T-cell (primary cell): ENCODE measurements at regions of chr2 and their contacts with region 1.

Region 1: GRCh38 chr2:20015472-20016083 is 3.1 kb upstream of the MATN3 start:
- DNase-seq: peak in 2 of 35 experiments; percentile 22 to 63
- ATAC-seq: peak in 2 of 4 experiments; percentile 37 to 55
- H3K4me3 ChIP-seq: no peak overlapping the region
- H3K4me3 Mint-ChIP-seq: no peak overlapping the region
- H3K27ac ChIP-seq: no peak overlapping the region
- H3K27ac Mint-ChIP-seq: no peak overlapping the region
- H3K4me1 ChIP-seq: peaks cover 4 to 13% of the 10 kb centered on the region in 2 experiments
- H3K4me1 Mint-ChIP-seq: peaks cover 5 to 13% (median 12%) of the 10 kb centered on the region in 3 donors
- H3K27me3 ChIP-seq: peaks cover 12 to 27% of the 10 kb centered on the region in 2 experiments
- H3K27me3 Mint-ChIP-seq: peaks cover 26 to 36% of the 10 kb centered on the region in 2 donors

Region 2: DNA sequence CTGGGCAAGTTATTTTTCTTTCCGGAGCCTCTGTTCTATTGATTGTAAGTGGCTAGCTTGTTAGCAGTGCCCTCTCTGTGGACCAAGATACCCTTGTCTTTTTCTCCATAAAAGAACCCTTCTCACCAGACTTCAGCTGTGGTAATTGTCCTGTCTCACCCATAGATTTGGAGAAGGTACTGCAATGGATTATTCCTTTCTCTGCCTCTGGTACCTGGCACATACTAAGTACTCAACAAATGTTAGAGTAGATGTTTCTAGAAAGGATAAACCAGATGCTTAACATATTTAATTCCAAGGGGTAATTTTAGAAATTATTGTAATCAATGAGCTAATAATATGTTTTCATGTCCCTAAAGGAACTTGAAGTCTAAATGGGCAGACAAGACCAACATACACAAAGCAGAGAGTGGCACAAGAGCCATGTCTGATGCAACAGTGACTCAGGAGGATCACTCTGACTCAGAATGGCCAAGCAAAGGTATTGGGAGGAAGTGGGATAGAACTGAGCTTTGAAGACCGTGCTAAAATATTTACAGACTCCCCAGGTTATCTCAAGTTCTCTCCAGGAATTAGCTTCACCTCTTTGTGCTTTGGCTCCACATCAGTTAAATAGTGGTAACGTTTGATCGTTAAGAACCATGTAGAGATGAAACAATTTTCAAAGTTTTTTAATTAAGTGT is 527.4 kb before region 1 on chr2:
- CTCF ChIA-PET with region 1: no interaction called
- POLR2A ChIA-PET with region 1: no interaction called
- DNase-seq: no peak
- ATAC-seq: no peak
- H3K4me3 ChIP-seq: no peak overlapping the region
- H3K4me3 Mint-ChIP-seq: no peak overlapping the region
- H3K27ac ChIP-seq: no peak overlapping the region
- H3K27ac Mint-ChIP-seq: no peak overlapping the region
- H3K4me1 ChIP-seq: no peaks in the 10 kb centered on the region
- H3K4me1 Mint-ChIP-seq: no peaks in the 10 kb centered on the region
- H3K27me3 ChIP-seq: peaks cover 0 to 3% of the 10 kb centered on the region in 2 experiments
- H3K27me3 Mint-ChIP-seq: peaks cover 31 to 43% of the 10 kb centered on the region in 2 donors

Region 3: DNA sequence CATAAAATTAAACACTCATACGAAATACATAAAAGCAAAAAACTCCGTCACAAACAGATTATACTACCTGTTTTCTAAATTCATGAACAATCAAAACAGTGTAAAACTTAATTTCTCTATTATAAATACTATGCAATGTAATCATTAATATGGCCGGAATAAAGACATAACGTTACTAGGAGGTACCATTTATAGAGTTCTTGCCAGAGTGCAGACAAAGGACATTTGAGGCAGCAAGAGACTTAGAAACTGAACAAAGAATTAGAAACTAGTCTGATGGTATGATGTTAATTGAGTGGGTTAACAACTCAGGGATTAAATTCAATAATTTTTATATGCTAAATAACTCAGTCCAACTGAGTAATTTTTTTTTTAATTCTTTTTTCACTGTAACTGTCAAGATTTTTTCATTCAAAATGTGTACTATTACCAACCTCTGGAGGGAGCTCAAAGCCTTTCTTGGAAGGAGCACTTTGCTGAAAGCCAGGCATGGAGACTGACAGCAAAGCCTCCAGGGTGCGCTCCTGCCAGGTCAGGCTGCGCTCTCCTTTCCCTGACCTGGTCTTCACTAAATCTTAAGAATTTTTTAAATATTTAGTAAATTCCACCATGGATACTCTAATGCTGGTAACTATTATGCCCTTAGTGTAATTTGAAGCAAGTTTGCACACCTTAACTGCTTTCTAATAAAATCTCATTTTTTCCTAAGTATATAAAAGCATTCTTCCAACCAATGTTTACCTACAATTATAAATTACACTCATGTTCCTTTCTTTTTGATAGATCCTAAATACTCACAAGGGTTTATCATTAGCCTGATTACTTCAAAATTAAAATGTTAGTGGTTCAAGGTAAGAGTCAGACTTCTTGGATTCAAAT is 59.8 kb before region 1 on chr2:
- CTCF ChIA-PET with region 1: interaction called in 1 of 2 experiments, 14 read pairs
- POLR2A ChIA-PET with region 1: no interaction called
- DNase-seq: peak in 32 of 35 experiments; percentile 3 to 70 (median 26)
- ATAC-seq: peak; percentile 63 to 83 (median 78)
- H3K4me3 ChIP-seq: no peak overlapping the region
- H3K4me3 Mint-ChIP-seq: no peak overlapping the region
- H3K27ac ChIP-seq: no peak overlapping the region
- H3K27ac Mint-ChIP-seq: no peak overlapping the region
- H3K4me1 ChIP-seq: no peaks in the 10 kb centered on the region
- H3K4me1 Mint-ChIP-seq: no peaks in the 10 kb centered on the region
- H3K27me3 ChIP-seq: no peaks in the 10 kb centered on the region
- H3K27me3 Mint-ChIP-seq: no peaks in the 10 kb centered on the region

Region 4: GRCh38 chr2:20001361-20001863 is 14.2 kb before region 1 on chr2:
- CTCF ChIA-PET with region 1: interaction called, 3 to 11 read pairs
- POLR2A ChIA-PET with region 1: no interaction called
- DNase-seq: no peak
- ATAC-seq: no peak
- H3K4me3 ChIP-seq: no peak overlapping the region
- H3K4me3 Mint-ChIP-seq: no peak overlapping the region
- H3K27ac ChIP-seq: no peak overlapping the region
- H3K27ac Mint-ChIP-seq: no peak overlapping the region
- H3K4me1 ChIP-seq: no peaks in the 10 kb centered on the region
- H3K4me1 Mint-ChIP-seq: no peaks in the 10 kb centered on the region
- H3K27me3 ChIP-seq: peaks cover 0 to 10% of the 10 kb centered on the region in 2 experiments
- H3K27me3 Mint-ChIP-seq: peaks cover 29 to 36% of the 10 kb centered on the region in 2 donors

Region 5: GRCh38 chr2:20051532-20052228 is 36.1 kb after region 1 on chr2 and contains the start of gene LAPTM4A:
- CTCF ChIA-PET with region 1: interaction called, 4 to 10 read pairs
- POLR2A ChIA-PET with region 1: no interaction called
- DNase-seq: peak; percentile 90 to 99 (median 98)
- ATAC-seq: peak; percentile 94 to 97 (median 96)
- H3K4me3 ChIP-seq: peak within 1 kb of the TSS; percentile 78 to 85
- H3K4me3 Mint-ChIP-seq: no peak within 1 kb of the TSS
- H3K27ac ChIP-seq: peak within 1 kb of the TSS; percentile 98
- H3K27ac Mint-ChIP-seq: no peak within 1 kb of the TSS
- H3K4me1 ChIP-seq: peaks cover 18 to 22% of the 10 kb centered on the region in 2 experiments
- H3K4me1 Mint-ChIP-seq: peaks cover 31 to 36% (median 32%) of the 10 kb centered on the region in 3 donors
- H3K27me3 ChIP-seq: peaks cover 2 to 11% of the 10 kb centered on the region in 2 experiments
- H3K27me3 Mint-ChIP-seq: peaks cover 12 to 19% of the 10 kb centered on the region in 2 donors
- total RNA-seq, gene LAPTM4A: 35.3 to 41.1 (median 38.1) TPM

Region 6: GRCh38 chr2:20097879-20098714 is 82.5 kb after region 1 on chr2:
- CTCF ChIA-PET with region 1: interaction called, 8 to 17 read pairs
- POLR2A ChIA-PET with region 1: no interaction called
- DNase-seq: peak; percentile 34 to 84 (median 66)
- ATAC-seq: peak; percentile 84 to 87 (median 86)
- H3K4me3 ChIP-seq: no peak overlapping the region
- H3K4me3 Mint-ChIP-seq: no peak overlapping the region
- H3K27ac ChIP-seq: no peak overlapping the region
- H3K27ac Mint-ChIP-seq: no peak overlapping the region
- H3K4me1 ChIP-seq: peaks cover 0 to 3% of the 10 kb centered on the region in 2 experiments
- H3K4me1 Mint-ChIP-seq: no peaks in the 10 kb centered on the region
- H3K27me3 ChIP-seq: peaks cover 0 to 23% of the 10 kb centered on the region in 2 experiments
- H3K27me3 Mint-ChIP-seq: peaks cover 6 to 28% of the 10 kb centered on the region in 2 donors

Region 7: GRCh38 chr2:20108655-20109396 is 93.2 kb after region 1 on chr2:
- CTCF ChIA-PET with region 1: interaction called, 3 to 11 read pairs
- POLR2A ChIA-PET with region 1: no interaction called
- DNase-seq: no peak
- ATAC-seq: no peak
- H3K4me3 ChIP-seq: no peak overlapping the region
- H3K4me3 Mint-ChIP-seq: no peak overlapping the region
- H3K27ac ChIP-seq: no peak overlapping the region
- H3K27ac Mint-ChIP-seq: no peak overlapping the region
- H3K4me1 ChIP-seq: peaks cover 0 to 5% of the 10 kb centered on the region in 2 experiments
- H3K4me1 Mint-ChIP-seq: peaks cover 0 to 9% (median 2%) of the 10 kb centered on the region in 3 donors
- H3K27me3 ChIP-seq: peaks cover 0 to 52% of the 10 kb centered on the region in 2 experiments
- H3K27me3 Mint-ChIP-seq: peaks cover 15 to 46% of the 10 kb centered on the region in 2 donors